Panc1 (cell line): ENCODE measurements at regions of chr3 and their contacts with region 1.

Region 1: DNA sequence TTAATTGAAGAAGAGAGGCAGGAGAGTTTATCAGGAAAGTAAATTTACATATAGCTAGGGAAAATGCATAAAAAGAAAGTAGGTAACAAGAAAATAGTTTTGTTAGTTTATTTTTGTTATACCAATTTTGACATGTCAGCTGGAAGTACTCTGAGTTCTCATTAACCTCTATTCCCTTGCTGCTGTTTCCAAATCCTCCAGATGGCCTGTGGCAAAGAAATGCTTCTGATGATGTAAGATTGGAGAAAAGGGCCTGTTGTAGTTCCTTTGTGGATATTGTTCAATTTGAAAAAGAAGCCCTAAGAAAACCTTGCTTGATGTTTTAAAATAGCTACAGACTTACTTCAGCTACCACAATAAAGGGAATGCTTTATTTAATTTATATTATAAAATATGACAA is 192.9 kb upstream of the SLITRK3 start:
- DNase-seq: no peak
- ATAC-seq: no peak
- H3K4me3 ChIP-seq: no peak overlapping the region
- H3K27ac ChIP-seq: no peak overlapping the region
- H3K4me1 ChIP-seq: no peaks in the 10 kb centered on the region
- H3K27me3 ChIP-seq: no peaks in the 10 kb centered on the region
- CTCF ChIP-seq: no peak

Region 2: DNA sequence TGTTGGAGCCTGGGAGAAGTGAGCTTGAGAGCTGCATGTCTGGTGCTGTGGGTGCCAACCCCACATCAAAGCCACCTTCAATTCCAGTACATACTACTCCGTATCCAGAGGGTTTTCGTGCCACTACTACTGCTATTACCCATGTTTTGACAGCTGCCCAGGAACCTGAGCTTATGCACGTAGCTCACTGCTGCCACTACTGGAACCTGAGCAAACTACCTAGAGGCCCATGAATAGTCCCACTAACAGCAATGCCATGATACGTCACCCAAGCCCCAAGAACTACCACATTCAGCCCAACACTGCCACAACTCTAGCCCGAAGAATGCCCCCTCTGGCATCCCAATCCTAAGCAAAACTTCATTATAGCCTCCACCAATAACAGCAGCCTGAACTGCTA is 663.4 kb after region 1 on chr3:
- CTCF ChIA-PET with region 1: no interaction called
- POLR2A ChIA-PET with region 1: no interaction called
- in situ Hi-C with region 1: no loop called
- intact Hi-C with region 1: loop called (anchors 5 kb)
- DNase-seq: no peak
- ATAC-seq: no peak
- H3K4me3 ChIP-seq: no peak overlapping the region
- H3K27ac ChIP-seq: no peak overlapping the region
- H3K4me1 ChIP-seq: no peaks in the 10 kb centered on the region
- H3K27me3 ChIP-seq: no peaks in the 10 kb centered on the region
- CTCF ChIP-seq: no peak